B cell (primary cell): ENCODE measurements at regions of chr3 and their contacts with region 1.

Region 1: DNA sequence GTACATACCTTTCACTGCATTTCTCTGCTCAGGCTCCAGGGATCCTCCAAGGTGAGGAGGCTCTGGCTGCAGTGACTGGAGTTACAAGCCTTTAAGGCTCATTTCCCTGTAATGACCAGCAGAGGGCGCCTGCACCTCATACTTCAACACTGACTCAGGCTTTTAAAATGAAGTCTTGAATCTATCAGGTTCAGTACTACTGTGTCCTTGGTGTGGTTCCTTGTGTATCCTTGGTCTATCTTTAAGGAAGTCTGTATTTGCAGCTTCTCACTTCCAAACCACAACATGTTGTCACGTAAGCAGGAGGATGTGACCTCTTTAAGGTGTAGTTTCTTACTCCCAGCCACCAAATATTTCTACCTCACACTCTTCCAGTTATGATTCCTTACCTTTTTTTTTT is 122.5 kb upstream of the ZBED2 start:
- DNase-seq: peak; percentile 80
- ATAC-seq: peak; percentile 93
- H3K4me3 ChIP-seq: no peak overlapping the region
- H3K4me3 Mint-ChIP-seq: no peak overlapping the region
- H3K27ac ChIP-seq: no peak overlapping the region
- H3K27ac Mint-ChIP-seq: no peak overlapping the region
- H3K4me1 ChIP-seq: no peaks in the 10 kb centered on the region
- H3K4me1 Mint-ChIP-seq: peaks cover under 1% of the 10 kb centered on the region
- H3K27me3 ChIP-seq: no peaks in the 10 kb centered on the region
- H3K27me3 Mint-ChIP-seq: no peaks in the 10 kb centered on the region
- CTCF ChIP-seq: peak; percentile 95

Region 2: GRCh38 chr3:111577794-111578685 is 139.6 kb before region 1 on chr3:
- CTCF ChIA-PET with region 1: interaction called, 47 read pairs
- POLR2A ChIA-PET with region 1: no interaction called
- intact Hi-C with region 1: no loop called
- DNase-seq: peak; percentile 47
- ATAC-seq: peak; percentile 86
- H3K4me3 ChIP-seq: no peak overlapping the region
- H3K4me3 Mint-ChIP-seq: no peak overlapping the region
- H3K27ac ChIP-seq: no peak overlapping the region
- H3K27ac Mint-ChIP-seq: peak overlapping the region; percentile 59
- H3K4me1 ChIP-seq: peaks cover 9 to 18% of the 10 kb centered on the region in 2 donors
- H3K4me1 Mint-ChIP-seq: peaks cover 31% of the 10 kb centered on the region
- H3K27me3 ChIP-seq: no peaks in the 10 kb centered on the region
- H3K27me3 Mint-ChIP-seq: no peaks in the 10 kb centered on the region
- CTCF ChIP-seq: peak; percentile 55

Region 3: DNA sequence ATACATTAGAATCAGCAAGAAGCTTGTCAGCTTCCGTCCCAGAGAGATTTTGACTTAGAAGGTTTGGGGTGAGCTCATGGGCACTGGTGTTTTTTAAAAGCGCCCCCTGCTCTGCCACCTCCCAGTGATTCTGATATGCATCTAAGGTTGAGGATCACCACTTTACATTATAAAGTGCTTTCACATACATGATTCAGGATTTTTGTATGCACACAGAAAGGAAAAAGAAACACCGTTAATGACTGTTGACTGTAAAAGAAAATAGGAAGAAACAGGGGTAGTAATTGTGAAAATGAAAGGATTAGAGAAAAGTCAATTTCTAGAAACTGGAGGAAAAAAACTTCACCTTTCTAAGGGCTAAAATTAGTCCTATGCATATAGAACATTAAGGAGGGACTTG is 17.5 kb before region 1 on chr3:
- CTCF ChIA-PET with region 1: interaction called, 13 read pairs
- POLR2A ChIA-PET with region 1: no interaction called
- intact Hi-C with region 1: no loop called
- DNase-seq: no peak
- ATAC-seq: no peak
- H3K4me3 ChIP-seq: no peak overlapping the region
- H3K4me3 Mint-ChIP-seq: no peak overlapping the region
- H3K27ac ChIP-seq: no peak overlapping the region
- H3K27ac Mint-ChIP-seq: no peak overlapping the region
- H3K4me1 ChIP-seq: peaks cover 3 to 6% of the 10 kb centered on the region in 2 donors
- H3K4me1 Mint-ChIP-seq: peaks cover 17% of the 10 kb centered on the region
- H3K27me3 ChIP-seq: no peaks in the 10 kb centered on the region
- H3K27me3 Mint-ChIP-seq: no peaks in the 10 kb centered on the region
- CTCF ChIP-seq: no peak

Region 4: GRCh38 chr3:111967651-111968274 is 250.2 kb after region 1 on chr3:
- CTCF ChIA-PET with region 1: interaction called, 366 read pairs
- POLR2A ChIA-PET with region 1: no interaction called
- intact Hi-C with region 1: loop called (anchors 1 kb)
- DNase-seq: peak; percentile 83
- ATAC-seq: peak; percentile 96
- H3K4me3 ChIP-seq: no peak overlapping the region
- H3K4me3 Mint-ChIP-seq: no peak overlapping the region
- H3K27ac ChIP-seq: no peak overlapping the region
- H3K27ac Mint-ChIP-seq: no peak overlapping the region
- H3K4me1 ChIP-seq: peaks cover 2 to 8% of the 10 kb centered on the region in 2 donors
- H3K4me1 Mint-ChIP-seq: peaks cover 4% of the 10 kb centered on the region
- H3K27me3 ChIP-seq: no peaks in the 10 kb centered on the region
- H3K27me3 Mint-ChIP-seq: no peaks in the 10 kb centered on the region
- CTCF ChIP-seq: peak; percentile 96

Region 5: GRCh38 chr3:111989061-111989678 is 271.6 kb after region 1 on chr3:
- CTCF ChIA-PET with region 1: interaction called, 15 read pairs
- POLR2A ChIA-PET with region 1: no interaction called
- intact Hi-C with region 1: no loop called
- DNase-seq: peak; percentile 55
- ATAC-seq: peak; percentile 76
- H3K4me3 ChIP-seq: no peak overlapping the region
- H3K4me3 Mint-ChIP-seq: no peak overlapping the region
- H3K27ac ChIP-seq: no peak overlapping the region
- H3K27ac Mint-ChIP-seq: no peak overlapping the region
- H3K4me1 ChIP-seq: no peaks in the 10 kb centered on the region
- H3K4me1 Mint-ChIP-seq: peaks cover 12% of the 10 kb centered on the region
- H3K27me3 ChIP-seq: no peaks in the 10 kb centered on the region
- H3K27me3 Mint-ChIP-seq: no peaks in the 10 kb centered on the region
- CTCF ChIP-seq: peak; percentile 80

Region 6: DNA sequence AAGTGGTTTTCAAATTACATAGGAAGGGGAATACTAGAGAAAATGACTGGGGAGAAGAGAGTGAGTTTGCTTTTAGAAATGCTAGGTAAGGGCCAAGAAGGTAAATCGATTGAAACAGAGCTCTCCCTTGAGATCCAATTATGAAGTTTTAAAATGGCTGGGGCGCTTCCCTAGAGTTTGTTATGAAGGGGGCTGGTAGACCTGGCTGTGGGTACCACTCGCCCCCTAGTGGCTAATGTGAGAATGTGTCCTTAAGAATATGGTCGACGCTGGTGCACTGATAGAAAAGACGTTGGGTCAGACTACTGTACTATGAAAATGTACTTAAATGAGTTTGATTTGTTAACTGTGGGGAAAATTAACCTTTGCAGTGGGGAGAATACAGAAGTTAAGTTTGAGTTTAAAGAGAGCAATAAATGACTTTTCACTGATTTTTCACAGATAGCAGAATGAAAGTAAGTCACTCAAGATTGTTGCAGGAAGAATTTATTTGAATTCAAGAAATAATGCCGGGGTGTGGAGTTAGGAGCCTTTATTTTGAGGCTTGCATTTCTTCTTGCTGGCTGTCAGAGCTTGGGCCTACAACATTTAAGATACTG is 326.1 kb after region 1 on chr3:
- CTCF ChIA-PET with region 1: interaction called, 13 read pairs
- POLR2A ChIA-PET with region 1: no interaction called
- intact Hi-C with region 1: loop called (anchors 1 kb)
- DNase-seq: peak; percentile 76
- ATAC-seq: peak; percentile 92
- H3K4me3 ChIP-seq: no peak overlapping the region
- H3K4me3 Mint-ChIP-seq: no peak overlapping the region
- H3K27ac ChIP-seq: no peak overlapping the region
- H3K27ac Mint-ChIP-seq: no peak overlapping the region
- H3K4me1 ChIP-seq: peaks cover 7 to 8% of the 10 kb centered on the region in 2 donors
- H3K4me1 Mint-ChIP-seq: peaks cover 4% of the 10 kb centered on the region
- H3K27me3 ChIP-seq: no peaks in the 10 kb centered on the region
- H3K27me3 Mint-ChIP-seq: peaks cover 9% of the 10 kb centered on the region
- CTCF ChIP-seq: peak; percentile 93

Region 7: GRCh38 chr3:112539825-112540650 is 822.4 kb after region 1 on chr3:
- CTCF ChIA-PET with region 1: no interaction called
- POLR2A ChIA-PET with region 1: no interaction called
- intact Hi-C with region 1: no loop called
- DNase-seq: peak; percentile 46
- ATAC-seq: peak; percentile 85
- H3K4me3 ChIP-seq: no peak overlapping the region
- H3K4me3 Mint-ChIP-seq: peak overlapping the region; percentile 60
- H3K27ac ChIP-seq: peak overlapping the region; percentile 21 to 43
- H3K27ac Mint-ChIP-seq: peak overlapping the region; percentile 71
- H3K4me1 ChIP-seq: peaks cover 14 to 15% of the 10 kb centered on the region in 2 donors
- H3K4me1 Mint-ChIP-seq: peaks cover 23% of the 10 kb centered on the region
- H3K27me3 ChIP-seq: no peaks in the 10 kb centered on the region
- H3K27me3 Mint-ChIP-seq: no peaks in the 10 kb centered on the region
- CTCF ChIP-seq: no peak